AG04450 (cell line): ENCODE measurements at regions of chr1 and their contacts with region 1.

Region 1: DNA sequence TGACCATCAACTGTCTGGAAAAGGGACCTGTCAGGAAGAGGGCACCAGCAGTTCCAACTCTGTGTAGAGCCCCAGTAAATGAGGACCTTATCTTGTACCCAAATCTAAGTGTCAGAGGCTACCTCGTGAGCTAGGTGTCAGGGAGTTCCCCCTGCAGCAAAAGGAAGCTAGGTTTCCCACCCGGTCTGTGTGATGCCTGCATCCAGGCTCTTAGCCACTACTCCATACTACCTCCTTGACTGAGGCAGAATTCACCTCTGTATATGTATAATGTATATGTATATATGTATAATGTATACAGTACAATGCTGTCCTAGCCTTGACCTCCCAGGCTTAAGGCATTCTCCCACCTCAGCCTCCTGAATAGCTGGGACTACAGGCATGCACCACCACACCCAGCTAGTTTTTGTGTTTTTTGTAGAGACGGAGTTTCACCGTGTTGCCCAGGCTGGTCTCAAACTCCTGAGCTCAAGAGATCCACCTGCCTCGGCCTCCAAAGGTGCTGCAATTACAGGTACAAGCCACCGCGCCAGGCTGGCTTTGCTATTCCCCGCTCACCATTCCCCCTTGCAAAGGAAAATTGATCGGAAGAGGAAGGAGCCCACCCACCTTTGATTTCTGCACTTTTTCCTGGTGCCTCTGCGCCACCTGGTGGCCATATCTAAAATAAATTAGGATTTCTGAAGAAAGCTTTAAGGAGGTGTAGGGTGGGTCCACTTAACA is 15.7 kb upstream of the LUZP1 start:
- DNase-seq: no peak
- H3K4me3 ChIP-seq: peak overlapping the region; percentile 52
- H3K27ac ChIP-seq: no peak overlapping the region
- H3K27me3 ChIP-seq: peaks cover 2% of the 10 kb centered on the region
- CTCF ChIP-seq: peak; percentile 72

Region 2: GRCh38 chr1:23019863-23020625 is 164.3 kb before region 1 on chr1:
- CTCF ChIA-PET with region 1: interaction called, 12 read pairs
- POLR2A ChIA-PET with region 1: interaction called, 3 read pairs
- DNase-seq: no peak
- H3K4me3 ChIP-seq: peak overlapping the region; percentile 86
- H3K27ac ChIP-seq: peak overlapping the region; percentile 55
- H3K27me3 ChIP-seq: no peaks in the 10 kb centered on the region
- CTCF ChIP-seq: no peak

Region 3: DNA sequence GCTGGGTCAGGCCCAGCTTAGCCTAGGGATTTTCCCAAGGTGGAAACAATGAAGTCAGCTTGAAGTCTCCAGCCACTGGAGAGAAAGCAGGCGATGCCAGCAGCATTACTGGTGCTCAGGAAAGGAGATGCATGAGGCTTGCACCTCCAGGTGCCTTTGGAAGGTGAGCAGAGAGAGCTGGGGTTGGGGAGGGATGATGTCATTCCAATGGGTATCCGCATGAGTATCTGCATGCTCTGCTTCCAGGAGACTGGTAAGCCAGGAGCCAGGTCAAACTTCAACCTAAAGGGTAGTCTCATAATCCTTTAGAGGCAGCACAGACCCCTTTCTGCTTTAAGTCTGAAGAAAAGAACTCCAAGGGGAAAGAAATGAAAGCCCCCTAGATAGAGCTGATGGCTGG is 96.3 kb before region 1 on chr1:
- CTCF ChIA-PET with region 1: interaction called, 303 read pairs
- POLR2A ChIA-PET with region 1: no interaction called
- DNase-seq: no peak
- H3K4me3 ChIP-seq: no peak overlapping the region
- H3K27ac ChIP-seq: no peak overlapping the region
- H3K27me3 ChIP-seq: no peaks in the 10 kb centered on the region
- CTCF ChIP-seq: no peak

Region 4: DNA sequence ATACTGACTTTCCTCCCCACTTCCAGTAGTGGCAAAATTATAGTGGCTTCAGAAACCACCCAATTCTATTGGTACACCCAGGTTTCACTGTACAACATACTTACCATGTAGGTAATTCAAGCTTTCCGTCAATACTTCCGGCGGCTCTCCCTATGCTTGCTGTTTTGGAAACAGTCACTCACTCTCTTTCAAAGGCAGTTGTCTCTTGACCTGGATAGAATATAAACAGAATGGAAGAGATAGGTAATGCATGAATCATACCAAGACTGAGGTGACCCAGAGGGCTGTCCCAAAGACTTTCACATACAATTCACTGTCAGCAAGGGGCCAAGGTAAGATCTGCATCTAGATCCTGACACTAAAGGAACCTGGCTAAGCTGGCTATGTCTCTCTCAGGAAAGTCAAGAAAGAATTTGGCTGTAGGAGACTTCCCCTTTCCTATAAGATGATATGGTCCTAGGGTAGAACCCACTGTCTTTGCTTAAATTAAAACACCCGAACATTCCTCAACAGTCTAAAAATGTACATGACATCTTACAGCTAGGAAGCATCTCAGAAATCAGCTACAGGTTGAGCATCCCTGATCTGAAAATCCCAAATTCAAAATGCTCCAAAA is 75.3 kb before region 1 on chr1:
- CTCF ChIA-PET with region 1: interaction called, 20 read pairs
- POLR2A ChIA-PET with region 1: no interaction called
- DNase-seq: no peak
- H3K4me3 ChIP-seq: no peak overlapping the region
- H3K27ac ChIP-seq: no peak overlapping the region
- H3K27me3 ChIP-seq: no peaks in the 10 kb centered on the region
- CTCF ChIP-seq: no peak

Region 5: GRCh38 chr1:23163395-23163794 is 21.0 kb before region 1 on chr1:
- CTCF ChIA-PET with region 1: interaction called, 19 read pairs
- POLR2A ChIA-PET with region 1: interaction called, 4 read pairs
- DNase-seq: no peak
- H3K4me3 ChIP-seq: no peak overlapping the region
- H3K27ac ChIP-seq: no peak overlapping the region
- H3K27me3 ChIP-seq: no peaks in the 10 kb centered on the region
- CTCF ChIP-seq: no peak

Region 6: DNA sequence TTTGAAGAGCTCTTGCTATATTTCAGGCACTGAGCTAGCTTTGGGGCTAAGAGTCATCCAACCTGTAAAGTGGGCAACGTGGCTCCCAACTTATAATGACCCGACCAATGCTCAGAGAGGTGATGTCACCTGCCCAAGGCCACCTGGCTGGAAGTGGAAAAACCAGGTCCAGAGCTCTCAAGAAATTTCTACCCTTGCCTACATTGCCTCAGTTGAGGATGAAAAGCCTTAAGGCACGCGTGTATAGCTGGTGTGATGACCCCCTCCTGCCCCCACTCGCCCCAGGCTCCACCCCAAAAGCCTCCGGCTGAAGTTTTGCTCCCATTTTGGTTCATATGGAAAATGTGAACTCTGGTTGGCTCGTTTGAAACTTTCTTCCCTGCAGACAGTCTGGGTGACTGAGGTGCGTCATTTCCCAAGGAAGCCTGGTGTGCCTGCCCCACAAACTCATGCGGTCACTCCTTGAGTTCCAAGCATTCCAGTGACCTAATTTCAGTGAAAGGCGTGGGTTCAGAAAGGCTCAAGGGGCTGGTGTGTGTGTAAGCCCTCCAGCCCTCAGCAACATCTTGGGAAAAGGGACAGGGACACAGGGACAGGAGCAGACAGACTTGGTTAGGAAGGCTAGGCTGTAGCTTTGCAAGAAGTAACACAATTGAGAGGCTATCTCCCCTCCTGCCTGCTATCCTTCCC is 12.4 kb after region 1 on chr1:
- CTCF ChIA-PET with region 1: interaction called, 29 read pairs
- POLR2A ChIA-PET with region 1: interaction called, 7 read pairs
- DNase-seq: peak; percentile 90
- H3K4me3 ChIP-seq: no peak overlapping the region
- H3K27ac ChIP-seq: peak overlapping the region; percentile 88
- H3K27me3 ChIP-seq: no peaks in the 10 kb centered on the region
- CTCF ChIP-seq: no peak

Region 7: DNA sequence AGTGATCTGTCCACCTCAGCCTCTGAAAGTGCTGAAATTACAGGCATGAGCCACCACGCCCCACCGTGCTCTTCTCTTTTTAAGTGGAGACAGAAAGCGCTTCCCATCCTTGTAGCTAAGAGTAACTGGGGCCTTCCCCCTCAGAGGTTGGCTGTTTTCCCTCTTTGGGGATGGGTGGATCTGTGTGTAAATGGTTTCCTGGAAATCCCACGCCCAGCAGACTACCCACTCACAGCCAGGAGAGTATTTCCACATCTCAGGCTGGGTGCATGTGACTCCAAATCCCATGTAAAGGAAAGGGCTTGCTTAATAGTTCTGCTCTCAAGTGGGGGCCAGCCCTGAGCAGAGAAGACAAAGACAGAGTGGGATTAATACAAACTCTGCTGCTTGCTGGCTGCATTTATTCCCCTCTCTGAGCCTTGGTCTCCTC is 259.7 kb after region 1 on chr1:
- CTCF ChIA-PET with region 1: no interaction called
- POLR2A ChIA-PET with region 1: no interaction called
- DNase-seq: peak; percentile 30
- H3K4me3 ChIP-seq: no peak overlapping the region
- H3K27ac ChIP-seq: no peak overlapping the region
- H3K27me3 ChIP-seq: no peaks in the 10 kb centered on the region
- CTCF ChIP-seq: no peak

Region 8: GRCh38 chr1:23634842-23635651 is 450.7 kb after region 1 on chr1:
- CTCF ChIA-PET with region 1: interaction called, 10 read pairs
- POLR2A ChIA-PET with region 1: no interaction called
- DNase-seq: peak; percentile 44
- H3K4me3 ChIP-seq: peak overlapping the region; percentile 64
- H3K27ac ChIP-seq: peak overlapping the region; percentile 73
- H3K27me3 ChIP-seq: peaks cover 6% of the 10 kb centered on the region
- CTCF ChIP-seq: peak; percentile 93